Right ventricle myocardium superior (tissue), 1 donor: ENCODE measurements at regions of chr10 and their contacts with region 1.

Region 1: GRCh38 chr10:58064714-58065528 is 202.8 kb downstream of the IPMK start:
- DNase-seq: no peak
- ATAC-seq: peak; percentile 36

Region 2: GRCh38 chr10:57341294-57341693 is 723.6 kb before region 1 on chr10:
- intact Hi-C with region 1: loop called (anchors 5 kb)
- DNase-seq: peak; percentile 20
- ATAC-seq: no peak

Region 3: DNA sequence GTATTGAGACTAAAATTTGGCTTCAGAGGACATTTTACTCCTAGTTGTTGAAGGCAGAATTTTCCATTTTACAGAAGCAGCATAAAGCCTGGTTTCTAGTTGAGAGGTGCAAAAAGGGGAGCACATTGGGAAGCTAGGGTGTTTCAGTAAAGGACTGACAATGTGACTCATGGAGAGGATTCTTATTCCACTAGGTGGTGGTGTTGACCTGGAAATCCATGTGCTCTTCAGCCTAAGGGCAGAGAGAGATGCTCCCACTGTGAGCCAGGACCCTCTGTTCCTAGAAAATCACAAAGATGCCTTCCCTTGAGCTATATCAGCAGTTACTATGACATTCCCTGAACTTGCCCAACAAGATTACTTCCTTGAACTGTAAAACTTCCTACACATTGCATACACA is 485.0 kb before region 1 on chr10:
- intact Hi-C with region 1: loop called (anchors 5 kb)
- DNase-seq: no peak
- ATAC-seq: peak; percentile 62

Region 4: GRCh38 chr10:58010073-58010702 is 54.7 kb before region 1 on chr10:
- intact Hi-C with region 1: no loop called
- DNase-seq: no peak
- ATAC-seq: no peak

Region 5: GRCh38 chr10:58164517-58164916 is 99.6 kb after region 1 on chr10:
- intact Hi-C with region 1: no loop called
- DNase-seq: no peak
- ATAC-seq: no peak